Activated naive CD4-positive, alpha-beta T cell treated with anti-CD3 and anti-CD28 coated beads, Interleukin-2, amount 10 ng/mL, durations not matched to agents 7 days and 5 days (primary cell): ENCODE measurements at regions of chr6 and their contacts with region 1.

Region 1: DNA sequence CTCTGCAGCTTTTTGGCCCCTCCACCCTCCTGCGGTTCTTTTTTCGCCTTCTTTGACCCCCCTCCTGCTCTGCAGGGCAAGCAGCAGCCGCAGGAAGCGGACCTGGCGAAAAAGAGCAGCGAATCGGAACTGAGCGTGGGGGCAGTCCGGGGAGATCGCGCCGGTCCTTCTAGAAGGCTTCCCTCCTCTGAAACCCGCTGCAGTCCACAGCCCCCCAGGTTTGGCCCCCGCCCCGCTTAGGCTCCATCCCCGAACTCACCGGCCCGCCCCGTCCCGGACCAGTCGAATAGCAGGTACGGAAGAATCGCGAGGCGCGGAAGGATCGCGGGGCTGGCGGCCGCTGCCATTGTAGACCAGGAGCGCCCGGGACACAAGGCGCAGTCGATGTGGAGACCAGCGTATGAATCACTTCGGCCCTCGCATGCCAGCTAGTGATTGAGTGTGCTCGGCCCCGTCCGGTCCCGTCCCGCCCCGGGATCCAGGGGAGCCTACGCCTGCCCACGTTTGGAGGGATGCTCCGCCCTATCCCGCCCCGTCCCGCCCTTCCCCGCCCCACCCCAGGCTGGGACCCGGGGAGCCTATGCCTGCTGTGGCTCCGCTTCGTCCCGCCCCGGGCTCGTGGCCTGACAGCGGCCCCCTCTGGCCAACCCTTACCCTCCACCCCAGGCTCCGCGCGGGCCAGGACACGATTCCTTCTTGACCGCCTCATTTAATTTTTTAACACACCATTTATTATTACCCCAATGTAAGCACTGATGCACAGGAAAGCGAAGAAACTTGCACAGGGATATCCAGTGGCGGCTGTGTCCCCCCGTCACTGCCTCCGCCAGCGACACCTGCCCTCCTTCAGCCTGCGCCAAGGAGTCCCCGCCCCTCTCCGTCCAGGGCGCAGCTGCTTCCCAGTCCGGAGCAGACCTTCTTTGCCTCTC is at the start of gene ULBP3:
- DNase-seq: peak; percentile 81
- H3K4me3 Mint-ChIP-seq: peak within 1 kb of the TSS; percentile 74
- H3K27ac Mint-ChIP-seq: no peak within 1 kb of the TSS
- H3K4me1 Mint-ChIP-seq: peaks cover 28% of the 10 kb centered on the region
- H3K27me3 Mint-ChIP-seq: peaks cover 51% of the 10 kb centered on the region

Region 2: GRCh38 chr6:149551920-149552319 is 517.1 kb before region 1 on chr6:
- CTCF ChIA-PET with region 1: no interaction called
- DNase-seq: no peak
- H3K4me3 Mint-ChIP-seq: no peak overlapping the region
- H3K27ac Mint-ChIP-seq: no peak overlapping the region
- H3K4me1 Mint-ChIP-seq: peaks cover 10% of the 10 kb centered on the region
- H3K27me3 Mint-ChIP-seq: peaks cover 30% of the 10 kb centered on the region

Region 3: DNA sequence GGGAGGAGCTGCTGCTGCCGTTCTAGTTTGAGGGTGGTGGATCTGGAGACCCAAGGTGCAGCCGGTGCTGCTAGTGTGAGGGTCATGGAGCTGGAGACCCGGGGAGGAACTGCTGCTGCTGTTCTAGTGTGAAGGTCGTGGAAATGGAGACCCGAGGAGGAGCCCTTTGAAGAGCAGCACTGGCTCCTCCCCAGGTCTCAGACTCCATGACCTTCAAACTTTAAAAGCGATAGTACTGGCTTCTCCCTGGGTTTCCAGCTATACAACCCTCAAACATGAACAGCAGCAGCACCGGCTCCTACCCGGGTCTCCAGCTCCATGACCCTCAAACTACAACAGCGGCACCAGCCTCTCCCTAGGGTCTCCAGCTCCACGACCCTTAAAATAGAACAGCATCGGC is 15.5 kb before region 1 on chr6:
- CTCF ChIA-PET with region 1: interaction called, 13 read pairs
- DNase-seq: no peak
- H3K4me3 Mint-ChIP-seq: no peak overlapping the region
- H3K27ac Mint-ChIP-seq: no peak overlapping the region
- H3K4me1 Mint-ChIP-seq: no peaks in the 10 kb centered on the region
- H3K27me3 Mint-ChIP-seq: peaks cover 62% of the 10 kb centered on the region

Region 4: GRCh38 chr6:150228072-150228733 is 159.2 kb after region 1 on chr6:
- CTCF ChIA-PET with region 1: no interaction called
- DNase-seq: no peak
- H3K4me3 Mint-ChIP-seq: no peak overlapping the region
- H3K27ac Mint-ChIP-seq: no peak overlapping the region
- H3K4me1 Mint-ChIP-seq: peaks cover 2% of the 10 kb centered on the region
- H3K27me3 Mint-ChIP-seq: peaks cover 18% of the 10 kb centered on the region